Mammary epithelial cell (primary cell): ENCODE measurements at regions of chr17 and their contacts with region 1.

Region 1: GRCh38 chr17:77388384-77389311 is 247.9 kb downstream of the SEC14L1 start:
- DNase-seq: no peak
- H3K4me3 ChIP-seq: no peak overlapping the region
- H3K27ac ChIP-seq: no peak overlapping the region
- H3K4me1 ChIP-seq: peaks cover 72% of the 10 kb centered on the region
- H3K27me3 ChIP-seq: no peaks in the 10 kb centered on the region
- CTCF ChIP-seq: no peak

Region 2: DNA sequence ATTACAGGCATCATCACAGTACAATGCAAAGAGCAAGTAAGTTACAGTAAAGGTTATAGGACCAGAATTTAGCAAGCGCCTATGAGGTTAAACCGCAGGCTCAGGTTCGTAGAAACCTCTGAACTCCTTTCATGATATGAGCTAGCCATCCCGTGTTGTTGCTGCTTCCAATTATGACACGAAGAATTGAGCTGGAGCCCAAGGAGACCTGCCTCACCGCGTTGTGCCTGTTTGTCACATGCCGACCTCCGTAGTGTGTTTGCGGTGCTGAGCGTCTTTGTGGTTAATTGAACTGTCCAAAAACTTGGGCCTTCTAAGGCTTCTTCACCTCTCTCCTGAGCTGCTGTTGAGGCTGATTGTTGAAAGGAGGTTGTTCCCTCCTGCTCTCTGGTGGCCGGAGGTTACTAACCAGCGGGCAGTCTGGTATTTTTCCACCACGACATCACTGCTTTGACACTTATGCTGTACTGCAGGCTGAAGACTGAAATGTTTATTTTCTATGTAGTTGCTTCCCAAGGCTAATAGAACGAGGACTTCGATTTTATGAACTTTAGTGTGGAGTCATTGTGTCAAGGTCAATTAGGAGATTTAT is 180.3 kb before region 1 on chr17:
- CTCF ChIA-PET with region 1: no interaction called
- dilution Hi-C with region 1: no loop called
- in situ Hi-C with region 1: no loop called
- intact Hi-C with region 1: no loop called
- DNase-seq: no peak
- H3K4me3 ChIP-seq: no peak overlapping the region
- H3K27ac ChIP-seq: no peak overlapping the region
- H3K4me1 ChIP-seq: no peaks in the 10 kb centered on the region
- H3K27me3 ChIP-seq: no peaks in the 10 kb centered on the region
- CTCF ChIP-seq: no peak

Region 3: GRCh38 chr17:77409282-77410161 is 20.9 kb after region 1 on chr17:
- CTCF ChIA-PET with region 1: interaction called, 4 read pairs
- dilution Hi-C with region 1: no loop called
- in situ Hi-C with region 1: no loop called
- intact Hi-C with region 1: loop called (anchors 2 kb)
- DNase-seq: peak; percentile 62
- H3K4me3 ChIP-seq: no peak overlapping the region
- H3K27ac ChIP-seq: peak overlapping the region; percentile 48
- H3K4me1 ChIP-seq: peaks cover 84% of the 10 kb centered on the region
- H3K27me3 ChIP-seq: no peaks in the 10 kb centered on the region
- CTCF ChIP-seq: no peak